ENCODE measurements at regions of chr18 and their contacts with region 1.

Region 1: DNA sequence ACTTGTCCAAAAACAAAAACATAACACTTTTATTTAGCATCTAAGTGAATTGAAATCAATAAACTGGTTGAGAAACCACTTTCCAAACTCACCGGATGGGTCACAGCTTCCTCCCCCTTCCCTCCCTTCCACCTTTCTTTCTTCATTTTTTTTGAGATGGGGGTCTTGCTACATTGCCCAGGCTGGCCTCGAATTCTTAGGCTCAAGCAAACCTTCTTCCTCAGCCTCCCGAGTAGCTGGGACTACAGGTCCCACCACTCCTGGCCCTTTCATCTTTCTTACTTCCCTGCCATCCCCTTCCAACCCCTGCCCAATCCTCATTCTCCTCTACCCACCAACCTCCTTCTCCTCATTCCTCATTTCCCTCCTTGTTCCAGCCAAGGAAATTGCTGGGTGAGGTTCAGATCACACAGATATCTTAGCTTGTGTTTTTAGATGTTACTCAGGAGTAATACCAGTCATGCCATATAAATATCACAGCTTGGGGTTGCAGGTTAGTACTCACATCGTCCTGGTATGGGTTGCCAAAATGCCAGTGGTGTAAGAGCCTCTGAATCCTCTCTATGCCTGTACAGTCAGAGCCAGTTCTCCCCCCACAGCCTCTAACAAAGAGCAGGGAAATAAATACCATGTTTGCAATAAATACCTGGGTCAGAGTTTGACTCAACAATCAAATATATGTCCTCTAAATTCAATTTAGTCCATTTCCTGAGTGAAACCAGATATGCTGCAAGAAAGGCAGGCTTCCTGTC is 132.7 kb upstream of the NDUFV2 start:
- DNase-seq: no peak
- ATAC-seq: no peak
- H3K4me3 ChIP-seq: no peak overlapping the region
- H3K4me3 Mint-ChIP-seq: no peak overlapping the region
- H3K27ac ChIP-seq: no peak overlapping the region
- H3K27ac Mint-ChIP-seq: no peak overlapping the region
- H3K4me1 ChIP-seq: peaks cover 21 to 22% of the 10 kb centered on the region in 2 donors
- H3K4me1 Mint-ChIP-seq: peaks cover 24% of the 10 kb centered on the region
- H3K27me3 ChIP-seq: no peaks in the 10 kb centered on the region
- H3K27me3 Mint-ChIP-seq: peaks cover 3% of the 10 kb centered on the region
- CTCF ChIP-seq: no peak

Region 2: DNA sequence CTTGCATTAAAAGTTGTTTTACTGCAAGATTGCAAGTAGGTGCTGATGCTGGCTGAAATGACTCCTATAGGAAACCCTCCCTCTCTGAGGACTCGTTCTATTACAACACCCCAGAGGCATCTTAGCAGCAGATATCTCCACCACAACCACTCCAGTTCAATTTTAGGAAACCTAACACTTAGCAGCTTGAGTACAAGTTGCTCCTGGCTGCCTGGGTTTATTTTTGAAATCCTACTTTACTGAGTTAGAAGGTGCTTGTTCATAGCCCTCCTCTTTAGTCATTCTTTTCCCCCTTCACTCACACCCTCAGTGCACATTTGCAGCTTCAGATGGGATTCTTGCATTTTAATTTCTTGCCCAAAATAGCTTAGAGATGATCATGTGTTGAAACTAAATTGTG is 153.0 kb before region 1 on chr18:
- CTCF ChIA-PET with region 1: no interaction called
- POLR2A ChIA-PET with region 1: no interaction called
- intact Hi-C with region 1: loop called (anchors 10 kb)
- DNase-seq: no peak
- ATAC-seq: no peak
- H3K4me3 ChIP-seq: no peak overlapping the region
- H3K4me3 Mint-ChIP-seq: no peak overlapping the region
- H3K27ac ChIP-seq: no peak overlapping the region
- H3K27ac Mint-ChIP-seq: no peak overlapping the region
- H3K4me1 ChIP-seq: peaks cover 0 to 3% of the 10 kb centered on the region in 2 donors
- H3K4me1 Mint-ChIP-seq: peaks cover 4% of the 10 kb centered on the region
- H3K27me3 ChIP-seq: no peaks in the 10 kb centered on the region
- H3K27me3 Mint-ChIP-seq: no peaks in the 10 kb centered on the region
- CTCF ChIP-seq: no peak

Measured in B cell (primary cell).